ENCODE measurements at regions of chr19 and their contacts with region 1.

Region 1: DNA sequence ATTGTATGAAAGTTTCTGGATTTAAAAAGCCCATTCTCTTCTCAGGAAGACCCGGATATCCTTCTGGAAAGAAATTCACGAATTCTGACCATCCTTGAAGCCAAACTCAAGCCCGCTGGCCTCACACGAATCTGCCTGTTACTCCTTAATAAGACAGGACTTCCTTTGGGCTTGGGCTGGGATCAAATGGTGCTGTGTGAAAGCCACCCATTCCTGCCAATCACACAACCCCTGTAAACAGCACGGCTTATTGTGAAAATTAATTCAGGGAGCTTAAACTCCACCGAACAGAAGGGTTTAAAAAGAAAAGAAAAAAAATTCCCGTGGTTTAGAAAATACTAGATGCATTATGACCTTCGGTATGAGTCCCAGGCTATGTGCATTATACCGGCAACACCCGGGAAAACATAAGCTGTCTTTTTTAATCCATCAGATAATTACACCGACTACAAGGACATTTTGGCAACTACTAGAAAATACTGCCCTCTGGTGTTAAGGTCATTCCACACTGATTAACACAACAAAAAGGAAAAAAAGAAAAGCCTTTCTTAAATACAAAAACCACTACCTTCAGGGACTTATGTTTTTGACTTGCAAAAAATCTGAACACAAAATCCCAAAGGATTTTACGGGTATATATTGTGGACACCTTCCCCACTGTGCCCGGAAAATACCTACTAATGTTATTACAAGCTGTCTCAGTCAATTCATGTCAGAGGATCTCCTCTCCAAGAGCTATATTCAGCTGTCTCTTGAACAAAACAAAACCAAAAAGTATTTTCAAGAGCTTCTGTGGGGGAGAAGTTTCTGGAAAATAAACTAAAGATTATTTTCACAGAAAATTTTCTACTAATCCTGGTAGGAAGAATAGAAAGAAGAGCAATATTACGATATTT is 76.0 kb upstream of the LSM14A start:
- H3K4me3 ChIP-seq: no peak overlapping the region
- H3K27ac ChIP-seq: no peak overlapping the region
- H3K4me1 ChIP-seq: peaks cover 9% of the 10 kb centered on the region
- CTCF ChIP-seq: peak; percentile 84

Region 2: GRCh38 chr19:33453265-33453664 is 643.0 kb before region 1 on chr19:
- CTCF ChIA-PET with region 1: interaction called, 11 read pairs
- POLR2A ChIA-PET with region 1: no interaction called
- H3K4me3 ChIP-seq: no peak overlapping the region
- H3K27ac ChIP-seq: no peak overlapping the region
- H3K4me1 ChIP-seq: no peaks in the 10 kb centered on the region
- CTCF ChIP-seq: no peak

Region 3: GRCh38 chr19:33795370-33796163 is 300.7 kb before region 1 on chr19:
- CTCF ChIA-PET with region 1: interaction called, 32 read pairs
- POLR2A ChIA-PET with region 1: interaction called, 12 read pairs
- H3K4me3 ChIP-seq: peak overlapping the region; percentile 63
- H3K27ac ChIP-seq: peak overlapping the region; percentile 100
- H3K4me1 ChIP-seq: peaks cover 18% of the 10 kb centered on the region
- CTCF ChIP-seq: peak; percentile 99

Region 4: GRCh38 chr19:33956941-33957340 is 139.3 kb before region 1 on chr19:
- CTCF ChIA-PET with region 1: interaction called, 10 read pairs
- POLR2A ChIA-PET with region 1: no interaction called
- H3K4me3 ChIP-seq: no peak overlapping the region
- H3K27ac ChIP-seq: no peak overlapping the region
- H3K4me1 ChIP-seq: no peaks in the 10 kb centered on the region
- CTCF ChIP-seq: no peak

Region 5: GRCh38 chr19:34017024-34017423 is 79.2 kb before region 1 on chr19:
- CTCF ChIA-PET with region 1: interaction called, 25 read pairs
- POLR2A ChIA-PET with region 1: no interaction called
- H3K4me3 ChIP-seq: no peak overlapping the region
- H3K27ac ChIP-seq: no peak overlapping the region
- H3K4me1 ChIP-seq: peaks cover 6% of the 10 kb centered on the region; the same call in 1 of the 2 replicates
- CTCF ChIP-seq: peak; percentile 72

Region 6: GRCh38 chr19:34051255-34051654 is 45.0 kb before region 1 on chr19:
- CTCF ChIA-PET with region 1: interaction called, 16 read pairs
- POLR2A ChIA-PET with region 1: no interaction called
- H3K4me3 ChIP-seq: no peak overlapping the region
- H3K27ac ChIP-seq: no peak overlapping the region
- H3K4me1 ChIP-seq: no peaks in the 10 kb centered on the region
- CTCF ChIP-seq: no peak

Region 7: DNA sequence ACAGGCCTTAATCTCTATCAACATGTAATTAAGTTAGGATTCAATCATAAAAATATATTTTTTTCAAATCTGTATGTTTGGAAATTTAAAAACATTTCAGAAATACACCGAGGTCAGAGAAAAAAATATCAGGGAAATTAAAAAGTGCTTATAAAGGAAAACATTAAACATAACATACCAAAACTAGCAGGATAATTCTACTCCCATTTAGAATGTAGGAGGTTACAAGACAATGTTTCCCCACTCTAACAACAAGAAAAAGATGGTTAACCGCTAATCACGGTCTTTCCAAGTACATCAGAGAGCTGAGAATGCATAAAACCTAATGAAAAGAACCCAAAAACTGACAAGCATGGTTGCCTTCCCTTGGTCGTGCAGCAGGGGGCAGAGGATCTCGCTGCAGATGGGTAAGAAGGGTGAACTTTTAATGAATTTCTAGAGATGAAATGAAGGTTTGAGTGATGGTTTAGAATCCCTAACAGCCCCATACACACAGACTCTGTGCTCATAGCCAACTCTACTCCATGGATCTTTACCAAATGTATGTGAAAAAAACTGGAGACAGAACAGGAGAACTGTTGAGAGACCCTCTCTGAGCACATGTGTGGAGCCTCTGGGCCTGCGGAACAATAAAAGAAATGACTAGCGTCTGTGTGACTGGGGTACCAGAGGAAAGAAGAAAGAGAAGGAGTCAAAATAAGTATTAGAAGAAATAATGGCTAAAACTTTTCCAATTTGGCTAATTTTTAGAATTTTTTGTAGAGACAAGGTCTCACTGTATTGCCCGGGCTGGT is 24.8 kb after region 1 on chr19:
- CTCF ChIA-PET with region 1: interaction called, 10 read pairs
- POLR2A ChIA-PET with region 1: no interaction called
- H3K4me3 ChIP-seq: no peak overlapping the region
- H3K27ac ChIP-seq: no peak overlapping the region
- H3K4me1 ChIP-seq: peaks cover 7% of the 10 kb centered on the region; the same call in 1 of the 2 replicates
- CTCF ChIP-seq: peak; percentile 52; the same call in 1 of the 2 replicates

Region 8: GRCh38 chr19:34359140-34359953 is 263.1 kb after region 1 on chr19:
- CTCF ChIA-PET with region 1: no interaction called
- POLR2A ChIA-PET with region 1: no interaction called
- H3K4me3 ChIP-seq: peak overlapping the region; percentile 39
- H3K27ac ChIP-seq: peak overlapping the region; percentile 89
- H3K4me1 ChIP-seq: peaks cover 8% of the 10 kb centered on the region
- CTCF ChIP-seq: peak; percentile 99